ENCODE measurements at regions of chr5 and their contacts with region 1.

Region 1: DNA sequence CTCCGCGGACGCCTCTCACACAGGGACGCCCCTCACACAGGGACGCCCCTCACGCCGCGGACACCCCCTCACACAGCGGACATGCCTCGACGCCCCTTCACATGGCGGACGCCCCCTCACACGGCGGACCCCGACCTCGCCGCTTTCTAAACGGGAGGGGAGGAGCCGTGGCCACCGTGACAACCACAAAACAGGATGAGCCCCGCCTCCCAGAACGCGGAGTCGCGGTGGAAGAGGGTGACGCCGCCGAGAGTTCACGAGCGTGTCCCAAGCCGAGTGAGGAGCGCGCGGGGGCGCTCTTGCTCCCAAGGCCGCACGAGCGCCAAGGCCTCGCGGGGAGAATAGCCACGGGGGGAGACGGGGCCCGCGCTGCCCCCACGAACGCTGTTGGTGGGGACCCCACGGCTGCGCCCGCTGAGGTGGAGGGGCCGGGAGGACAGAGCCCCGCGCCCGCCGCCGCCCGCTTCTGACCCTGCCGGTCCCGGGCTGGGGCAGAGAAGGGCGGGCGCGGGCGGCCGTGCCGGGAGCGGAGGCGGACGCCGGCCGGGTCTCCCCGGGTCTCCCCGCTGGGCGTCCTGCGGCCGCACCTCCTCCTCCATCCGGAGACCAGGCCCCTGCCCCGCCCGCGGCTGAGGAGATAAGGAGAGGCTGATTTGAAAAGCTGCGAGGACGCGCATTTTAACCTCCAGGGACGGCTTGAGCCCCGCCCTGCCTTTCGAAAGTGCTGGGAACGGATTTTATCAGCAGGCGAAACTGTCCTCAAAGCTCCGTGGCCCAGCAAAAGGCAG is 3.9 kb upstream of the NKD2 start:
- DNase-seq: peak; percentile 86

Region 2: GRCh38 chr5:1140171-1140817 is 135.6 kb after region 1 on chr5:
- intact Hi-C with region 1: loop called (anchors 2 kb)
- DNase-seq: peak; percentile 86

Region 3: DNA sequence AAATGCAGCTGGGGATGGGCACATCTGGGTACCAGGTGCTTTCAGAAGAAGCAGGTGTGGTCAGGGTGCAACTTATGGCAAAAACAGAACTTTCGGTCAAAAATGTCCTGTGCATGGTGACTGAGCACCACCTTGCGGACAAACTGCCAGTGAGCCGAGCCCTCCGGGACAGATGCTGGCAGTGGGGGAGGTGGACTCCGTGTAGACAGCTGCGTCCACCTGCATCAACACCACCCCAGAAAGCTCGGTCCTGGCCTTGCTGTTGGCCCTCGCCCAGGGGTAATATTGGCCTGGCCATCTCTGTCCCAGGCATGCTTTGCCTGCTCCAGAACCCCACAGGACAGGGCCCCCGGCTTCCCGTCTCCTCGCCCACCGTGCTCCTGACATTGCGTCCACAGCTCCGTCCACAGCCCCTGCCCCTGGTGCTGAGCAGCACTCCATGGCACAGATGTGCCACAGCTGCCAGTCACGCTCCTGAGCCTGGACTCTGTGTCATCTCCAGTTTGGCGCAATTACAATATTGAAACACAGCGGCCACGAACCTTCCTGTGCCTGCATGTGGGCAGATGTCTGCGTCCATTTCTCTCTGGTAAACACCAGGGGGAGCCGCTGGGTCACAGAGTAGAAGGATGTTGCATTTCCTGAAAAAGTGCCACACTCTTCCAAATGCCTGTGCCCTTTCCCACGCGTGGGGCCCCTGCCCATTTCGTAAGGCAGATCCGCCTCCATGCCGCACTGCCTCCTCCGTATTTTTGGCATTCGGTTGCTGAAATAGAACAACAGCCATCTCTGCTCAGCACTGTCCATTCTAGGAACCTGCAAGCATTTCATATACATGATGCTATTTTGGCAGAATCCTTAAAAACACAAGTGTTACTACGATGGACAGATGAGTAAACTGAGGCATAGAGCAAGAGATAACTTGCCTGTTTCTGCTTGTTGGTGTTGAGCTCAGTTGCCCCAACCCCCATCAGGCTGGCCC is 163.4 kb after region 1 on chr5:
- intact Hi-C with region 1: loop called (anchors 5 kb)
- DNase-seq: no peak

Region 4: GRCh38 chr5:1208743-1209506 is 204.3 kb after region 1 on chr5:
- intact Hi-C with region 1: no loop called
- DNase-seq: no peak

Region 5: GRCh38 chr5:1344975-1345838 is 340.6 kb after region 1 on chr5 and contains the start of gene CLPTM1L:
- intact Hi-C with region 1: loop called (anchors 5 kb)
- DNase-seq: peak; percentile 91
- total RNA-seq, gene CLPTM1L: 42.6 TPM